Activated B cell treated with CpG ODN at 0.5 μM for 24 hours (primary cell): ENCODE measurements at regions of chr13 and their contacts with region 1.

Region 1: GRCh38 chr13:27556109-27556508 is 64.2 kb downstream of the LNX2 start:
- DNase-seq: no peak
- ATAC-seq: no peak
- H3K4me3 Mint-ChIP-seq: no peak overlapping the region
- H3K27ac Mint-ChIP-seq: no peak overlapping the region
- H3K4me1 Mint-ChIP-seq: no peaks in the 10 kb centered on the region
- H3K27me3 Mint-ChIP-seq: no peaks in the 10 kb centered on the region
- CTCF ChIP-seq: no peak

Region 2: GRCh38 chr13:27587095-27587746 is 31.1 kb after region 1 on chr13:
- CTCF ChIA-PET with region 1: no interaction called
- POLR2A ChIA-PET with region 1: no interaction called
- intact Hi-C with region 1: loop called (anchors 1 kb)
- DNase-seq: no peak
- ATAC-seq: no peak
- H3K4me3 Mint-ChIP-seq: no peak overlapping the region
- H3K27ac Mint-ChIP-seq: no peak overlapping the region
- H3K4me1 Mint-ChIP-seq: peaks cover 17% of the 10 kb centered on the region
- H3K27me3 Mint-ChIP-seq: no peaks in the 10 kb centered on the region
- CTCF ChIP-seq: no peak

Region 3: DNA sequence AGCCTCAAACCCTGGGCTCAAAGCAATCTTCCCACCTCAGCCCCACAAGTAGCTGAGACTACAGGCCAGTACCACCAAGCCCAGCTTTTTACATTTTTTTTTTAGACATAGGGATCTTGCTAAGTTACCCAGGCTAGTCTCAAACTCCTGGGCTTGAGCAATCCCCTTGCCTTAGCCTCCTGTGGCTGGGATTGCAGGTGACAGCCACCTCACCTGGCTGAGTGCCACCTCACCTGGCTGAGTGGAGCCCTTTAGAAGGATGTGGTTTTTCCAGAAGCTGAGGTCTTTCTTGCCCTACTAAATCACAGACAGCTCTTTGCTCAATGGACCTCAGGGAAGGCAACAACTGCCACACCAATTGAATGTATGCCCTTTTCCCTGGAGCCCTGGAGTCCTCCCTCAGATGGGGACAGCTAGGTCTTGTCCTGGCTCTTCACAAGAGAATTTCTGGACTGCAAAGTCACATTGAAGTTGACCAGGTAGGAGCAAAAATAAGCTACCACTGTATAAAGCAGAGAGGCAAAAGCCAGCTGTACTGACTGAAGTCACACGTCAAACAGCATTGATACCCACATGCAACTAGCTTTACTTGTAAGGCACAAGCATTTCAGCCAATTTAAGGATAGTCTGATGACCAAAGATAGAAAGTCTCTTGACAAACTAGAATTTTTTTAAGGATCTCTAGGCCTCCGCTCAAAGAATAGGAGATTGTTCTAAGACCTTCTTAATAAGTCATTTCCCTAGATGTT is 377.6 kb after region 1 on chr13:
- CTCF ChIA-PET with region 1: no interaction called
- POLR2A ChIA-PET with region 1: no interaction called
- intact Hi-C with region 1: no loop called
- DNase-seq: no peak
- ATAC-seq: no peak
- H3K4me3 Mint-ChIP-seq: no peak overlapping the region
- H3K27ac Mint-ChIP-seq: no peak overlapping the region
- H3K4me1 Mint-ChIP-seq: no peaks in the 10 kb centered on the region
- H3K27me3 Mint-ChIP-seq: peaks cover 33% of the 10 kb centered on the region
- CTCF ChIP-seq: no peak

Region 4: DNA sequence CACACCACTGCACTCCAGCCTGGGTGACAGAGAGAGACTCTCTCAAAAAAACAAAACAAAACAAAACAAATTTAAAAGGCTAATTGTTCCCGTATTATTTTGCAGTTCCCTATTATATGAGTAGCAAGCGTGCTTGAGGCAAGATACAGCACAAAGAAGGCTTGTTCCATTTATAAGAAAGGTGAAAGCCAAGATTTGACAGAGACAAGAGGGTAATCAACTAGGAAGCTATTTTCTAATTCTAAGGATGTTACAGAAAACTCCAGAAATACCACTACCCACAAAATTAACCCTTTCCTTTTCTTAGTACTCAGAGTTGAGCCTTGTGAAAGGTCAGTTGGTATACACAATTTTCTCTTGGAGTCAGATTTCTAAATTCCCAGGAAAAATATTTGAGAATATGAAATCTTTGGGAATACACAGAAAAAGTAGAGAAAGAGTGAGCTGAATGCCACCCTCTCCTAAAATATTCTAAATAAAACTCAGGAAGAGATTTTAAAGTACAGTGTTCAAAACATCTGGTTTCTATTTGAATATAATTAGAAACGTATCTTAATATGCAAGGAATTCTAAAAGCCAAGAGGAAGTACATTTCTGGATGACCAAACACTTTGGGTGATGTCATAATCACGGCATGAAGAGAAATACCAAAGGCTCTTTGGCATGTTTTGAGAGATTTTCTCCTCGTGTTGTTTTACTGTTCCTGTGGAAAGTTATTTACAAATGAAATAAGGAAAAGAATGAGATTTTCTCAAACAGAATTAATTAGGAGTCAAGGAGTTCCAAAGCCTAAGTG is 1001.8 kb after region 1 on chr13:
- CTCF ChIA-PET with region 1: no interaction called
- POLR2A ChIA-PET with region 1: no interaction called
- intact Hi-C with region 1: no loop called
- DNase-seq: no peak
- ATAC-seq: no peak
- H3K4me3 Mint-ChIP-seq: no peak overlapping the region
- H3K27ac Mint-ChIP-seq: no peak overlapping the region
- H3K4me1 Mint-ChIP-seq: no peaks in the 10 kb centered on the region
- H3K27me3 Mint-ChIP-seq: peaks cover 11% of the 10 kb centered on the region
- CTCF ChIP-seq: no peak